ENCODE measurements at regions of chrX and their contacts with region 1.

Region 1: GRCh38 chrX:150693775-150694574 is 779 bp downstream of the MTMR1 start:
- DNase-seq: peak; percentile 88 to 99
- H3K4me3 ChIP-seq: peak overlapping the region; percentile 75
- H3K27ac ChIP-seq: peak overlapping the region; percentile 93
- H3K4me1 ChIP-seq: peaks cover 50% of the 10 kb centered on the region
- H3K27me3 ChIP-seq: no peaks in the 10 kb centered on the region
- CTCF ChIP-seq: 0 out of 2 replicates have a peak, but pooled peaks have one; percentile 16

Region 2: DNA sequence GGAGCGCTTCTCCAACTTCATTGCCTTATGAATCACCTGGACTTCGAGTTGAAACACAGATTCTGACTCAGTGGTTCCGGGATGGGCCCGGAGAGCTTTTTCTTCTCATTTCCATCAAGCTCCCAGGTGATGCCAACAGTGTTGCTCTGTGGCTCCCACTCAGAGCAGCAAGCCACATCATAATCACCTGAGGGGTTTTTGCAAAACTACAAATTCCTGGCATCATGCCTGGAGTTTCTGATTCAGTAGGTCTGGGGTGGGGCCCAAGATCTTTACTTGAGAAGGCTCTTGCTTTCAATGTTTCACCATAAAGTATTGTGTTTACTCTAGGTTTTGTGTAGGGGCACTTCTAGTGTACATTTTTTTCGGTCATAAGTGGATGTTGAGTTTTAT is 118.6 kb before region 1 on chrX:
- CTCF ChIA-PET with region 1: no interaction called
- POLR2A ChIA-PET with region 1: no interaction called
- intact Hi-C with region 1: loop called (anchors 2 kb)
- DNase-seq: peak; percentile 82 to 99
- H3K4me3 ChIP-seq: peak overlapping the region; percentile 29; the same call in 1 of the 2 replicates
- H3K27ac ChIP-seq: peak overlapping the region; percentile 74
- H3K4me1 ChIP-seq: peaks cover 61% of the 10 kb centered on the region
- H3K27me3 ChIP-seq: no peaks in the 10 kb centered on the region
- CTCF ChIP-seq: no peak

Region 3: DNA sequence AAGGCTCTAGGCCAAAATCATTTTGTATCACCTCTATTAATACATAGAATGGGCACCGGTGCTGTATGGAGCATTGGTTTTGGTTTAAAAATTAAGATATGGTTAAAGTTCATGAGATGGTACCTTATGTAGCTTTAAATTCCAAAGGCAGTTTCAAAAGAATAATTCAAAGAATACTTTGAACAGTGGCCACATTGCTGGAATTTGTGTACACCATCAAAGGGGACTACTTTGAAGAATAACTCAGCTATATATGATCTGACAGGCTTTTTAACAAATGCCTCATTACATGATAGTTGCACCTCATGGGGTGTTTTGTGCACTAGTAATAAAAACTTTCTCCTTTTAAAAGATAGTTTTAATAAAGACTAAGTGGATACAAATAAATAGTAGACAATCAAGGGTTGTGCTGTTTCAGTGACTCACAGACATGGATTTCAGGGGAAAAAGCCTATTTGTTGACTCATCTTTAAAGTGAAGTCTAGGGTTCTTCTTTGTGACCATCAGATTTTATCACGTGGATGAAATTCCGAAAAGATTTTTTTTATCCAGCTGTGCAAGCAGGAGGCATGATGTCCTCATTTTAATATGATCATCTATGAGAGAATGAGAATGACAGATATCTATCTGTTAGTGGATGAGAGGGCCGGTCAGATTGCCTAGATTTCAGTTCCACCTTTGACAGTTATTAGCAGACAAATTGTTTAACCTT is 112.7 kb before region 1 on chrX:
- CTCF ChIA-PET with region 1: no interaction called
- POLR2A ChIA-PET with region 1: no interaction called
- intact Hi-C with region 1: loop called (anchors 5 kb)
- DNase-seq: peak in 1 of 2 experiments; percentile 87
- H3K4me3 ChIP-seq: no peak overlapping the region
- H3K27ac ChIP-seq: peak overlapping the region; percentile 57
- H3K4me1 ChIP-seq: peaks cover 27% of the 10 kb centered on the region
- H3K27me3 ChIP-seq: no peaks in the 10 kb centered on the region
- CTCF ChIP-seq: no peak